ENCODE measurements at regions of chr1 and their contacts with region 1.

Region 1: DNA sequence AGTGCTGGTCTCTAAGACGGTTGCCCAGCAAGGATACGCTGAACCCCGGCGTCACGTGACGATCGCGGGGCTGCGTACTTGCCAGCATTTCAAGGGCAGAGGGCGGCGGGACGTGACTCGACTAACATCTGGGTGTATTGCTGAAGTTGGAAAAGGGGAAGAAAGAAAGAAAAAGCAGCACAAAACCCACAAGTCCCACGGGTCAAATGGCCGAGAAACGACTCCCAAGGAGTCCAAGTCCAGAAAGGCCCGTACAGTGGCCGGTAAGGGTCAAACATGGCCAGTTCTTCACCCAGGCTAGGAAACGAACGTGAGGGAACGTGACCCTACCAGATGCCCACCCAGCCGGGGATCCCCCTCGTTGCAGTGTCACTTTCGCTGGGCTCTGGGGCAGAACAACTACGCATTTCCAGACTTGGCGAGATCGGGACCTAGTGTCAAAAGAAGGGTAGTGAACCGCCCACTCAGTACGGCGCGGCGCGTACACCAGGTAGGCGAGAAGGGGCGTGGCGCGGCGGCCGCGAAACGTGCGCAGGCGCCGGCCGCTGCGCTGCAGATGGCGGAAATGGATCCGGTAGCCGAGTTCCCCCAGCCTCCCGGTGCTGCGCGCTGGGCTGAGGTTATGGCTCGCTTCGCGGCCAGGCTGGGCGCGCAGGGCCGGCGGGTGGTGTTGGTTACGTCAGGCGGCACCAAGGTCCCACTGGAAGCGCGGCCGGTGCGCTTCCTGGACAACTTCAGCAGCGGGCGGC is at the starts of genes PPCS and ZMYND12:
- DNase-seq: peak; percentile 87
- H3K4me3 ChIP-seq: peak within 1 kb of the TSS; percentile 99
- H3K27ac ChIP-seq: peak within 1 kb of the TSS; percentile 98
- H3K4me1 ChIP-seq: peaks cover 30% of the 10 kb centered on the region
- H3K27me3 ChIP-seq: no peaks in the 10 kb centered on the region
- CTCF ChIP-seq: peak; percentile 31
- total RNA-seq, gene PPCS: 33.9 TPM
- total RNA-seq, gene ZMYND12: 2.6 TPM

Region 2: GRCh38 chr1:42335050-42335808 is 121.0 kb before region 1 on chr1 and contains the start of gene FOXJ3:
- intact Hi-C with region 1: loop called (anchors 10 kb)
- DNase-seq: peak; percentile 93
- H3K4me3 ChIP-seq: peak within 1 kb of the TSS; percentile 95
- H3K27ac ChIP-seq: peak within 1 kb of the TSS; percentile 97
- H3K4me1 ChIP-seq: peaks cover 62% of the 10 kb centered on the region
- H3K27me3 ChIP-seq: no peaks in the 10 kb centered on the region
- CTCF ChIP-seq: no peak
- total RNA-seq, gene FOXJ3: 40.7 TPM